ENCODE measurements at regions of chr3 and their contacts with region 1.

Region 1: GRCh38 chr3:114290911-114291901 is 2.6 kb upstream of the TIGIT start:
- DNase-seq: peak; percentile 73 to 93 (median 89)
- ATAC-seq: peak; percentile 76 to 85 (median 81)
- H3K4me3 ChIP-seq: peak overlapping the region in 1 of 2 donors; percentile 37
- H3K4me3 Mint-ChIP-seq: peak overlapping the region; percentile 64 to 83 (median 78)
- H3K27ac ChIP-seq: peak overlapping the region; percentile 95
- H3K27ac Mint-ChIP-seq: peak overlapping the region; percentile 94
- H3K4me1 ChIP-seq: peaks cover 0 to 53% of the 10 kb centered on the region in 2 experiments
- H3K4me1 Mint-ChIP-seq: peaks cover 20 to 62% (median 52%) of the 10 kb centered on the region in 3 donors
- H3K27me3 ChIP-seq: no peaks in the 10 kb centered on the region
- H3K27me3 Mint-ChIP-seq: no peaks in the 10 kb centered on the region

Region 2: DNA sequence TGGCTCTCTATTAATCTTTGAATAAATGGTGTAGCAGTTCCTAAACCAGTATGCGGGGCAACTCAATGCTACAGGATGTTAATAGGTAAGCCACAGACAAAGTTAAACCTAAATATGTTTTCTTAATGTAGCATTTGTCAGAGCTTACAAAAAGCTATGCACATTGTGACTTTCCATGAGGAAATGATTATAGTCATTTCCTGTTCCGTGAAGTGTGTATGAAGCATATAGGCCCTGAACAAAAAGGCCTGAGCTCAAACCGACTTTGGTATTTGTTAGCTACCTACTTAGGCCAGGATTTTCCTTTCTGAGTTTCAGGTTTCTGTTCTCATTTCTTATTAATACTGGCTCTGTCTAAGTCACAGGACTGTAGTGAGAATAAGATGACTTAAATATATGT is 68.1 kb before region 1 on chr3:
- CTCF ChIA-PET with region 1: interaction called, 8 to 13 read pairs
- POLR2A ChIA-PET with region 1: no interaction called
- DNase-seq: peak in 5 of 35 experiments; percentile 9 to 67 (median 16)
- ATAC-seq: peak; percentile 64 to 85 (median 64)
- H3K4me3 ChIP-seq: no peak overlapping the region
- H3K4me3 Mint-ChIP-seq: peak overlapping the region in 1 of 3 donors; percentile 41
- H3K27ac ChIP-seq: peak overlapping the region; percentile 87
- H3K27ac Mint-ChIP-seq: peak overlapping the region; percentile 92 to 97
- H3K4me1 ChIP-seq: peaks cover 4 to 62% of the 10 kb centered on the region in 2 experiments
- H3K4me1 Mint-ChIP-seq: peaks cover under 1 to 81% (median 75%) of the 10 kb centered on the region in 3 donors
- H3K27me3 ChIP-seq: no peaks in the 10 kb centered on the region
- H3K27me3 Mint-ChIP-seq: no peaks in the 10 kb centered on the region

Region 3: GRCh38 chr3:114307222-114307830 is 16.1 kb after region 1 on chr3:
- CTCF ChIA-PET with region 1: interaction called, 3 to 18 read pairs
- POLR2A ChIA-PET with region 1: interaction called in 1 of 2 experiments, 3 read pairs
- DNase-seq: peak in 6 of 35 experiments; percentile 15 to 67 (median 21)
- ATAC-seq: peak; percentile 61 to 66 (median 62)
- H3K4me3 ChIP-seq: peak overlapping the region in 1 of 2 donors; percentile 23
- H3K4me3 Mint-ChIP-seq: peak overlapping the region; percentile 18 to 67 (median 48)
- H3K27ac ChIP-seq: peak overlapping the region; percentile 86
- H3K27ac Mint-ChIP-seq: peak overlapping the region; percentile 83 to 90
- H3K4me1 ChIP-seq: peaks cover 0 to 54% of the 10 kb centered on the region in 2 experiments
- H3K4me1 Mint-ChIP-seq: peaks cover 42 to 62% (median 49%) of the 10 kb centered on the region in 3 donors
- H3K27me3 ChIP-seq: no peaks in the 10 kb centered on the region
- H3K27me3 Mint-ChIP-seq: no peaks in the 10 kb centered on the region

Region 4: GRCh38 chr3:114435386-114436115 is 144.3 kb after region 1 on chr3:
- CTCF ChIA-PET with region 1: no interaction called
- POLR2A ChIA-PET with region 1: no interaction called
- DNase-seq: no peak
- ATAC-seq: no peak
- H3K4me3 ChIP-seq: no peak overlapping the region
- H3K4me3 Mint-ChIP-seq: no peak overlapping the region
- H3K27ac ChIP-seq: no peak overlapping the region
- H3K27ac Mint-ChIP-seq: no peak overlapping the region
- H3K4me1 ChIP-seq: no peaks in the 10 kb centered on the region
- H3K4me1 Mint-ChIP-seq: peaks cover 0 to 3% (median 0%) of the 10 kb centered on the region in 3 donors
- H3K27me3 ChIP-seq: no peaks in the 10 kb centered on the region
- H3K27me3 Mint-ChIP-seq: no peaks in the 10 kb centered on the region

Region 5: GRCh38 chr3:114498779-114499370 is 207.7 kb after region 1 on chr3:
- CTCF ChIA-PET with region 1: no interaction called
- POLR2A ChIA-PET with region 1: no interaction called
- DNase-seq: no peak
- ATAC-seq: no peak
- H3K4me3 ChIP-seq: no peak overlapping the region
- H3K4me3 Mint-ChIP-seq: no peak overlapping the region
- H3K27ac ChIP-seq: no peak overlapping the region
- H3K27ac Mint-ChIP-seq: no peak overlapping the region
- H3K4me1 ChIP-seq: peaks cover 3 to 12% of the 10 kb centered on the region in 2 experiments
- H3K4me1 Mint-ChIP-seq: peaks cover 39 to 58% (median 39%) of the 10 kb centered on the region in 3 donors
- H3K27me3 ChIP-seq: no peaks in the 10 kb centered on the region
- H3K27me3 Mint-ChIP-seq: peaks cover 0 to 1% of the 10 kb centered on the region in 2 donors